ENCODE measurements at regions of chr3 and their contacts with region 1.

Region 1: DNA sequence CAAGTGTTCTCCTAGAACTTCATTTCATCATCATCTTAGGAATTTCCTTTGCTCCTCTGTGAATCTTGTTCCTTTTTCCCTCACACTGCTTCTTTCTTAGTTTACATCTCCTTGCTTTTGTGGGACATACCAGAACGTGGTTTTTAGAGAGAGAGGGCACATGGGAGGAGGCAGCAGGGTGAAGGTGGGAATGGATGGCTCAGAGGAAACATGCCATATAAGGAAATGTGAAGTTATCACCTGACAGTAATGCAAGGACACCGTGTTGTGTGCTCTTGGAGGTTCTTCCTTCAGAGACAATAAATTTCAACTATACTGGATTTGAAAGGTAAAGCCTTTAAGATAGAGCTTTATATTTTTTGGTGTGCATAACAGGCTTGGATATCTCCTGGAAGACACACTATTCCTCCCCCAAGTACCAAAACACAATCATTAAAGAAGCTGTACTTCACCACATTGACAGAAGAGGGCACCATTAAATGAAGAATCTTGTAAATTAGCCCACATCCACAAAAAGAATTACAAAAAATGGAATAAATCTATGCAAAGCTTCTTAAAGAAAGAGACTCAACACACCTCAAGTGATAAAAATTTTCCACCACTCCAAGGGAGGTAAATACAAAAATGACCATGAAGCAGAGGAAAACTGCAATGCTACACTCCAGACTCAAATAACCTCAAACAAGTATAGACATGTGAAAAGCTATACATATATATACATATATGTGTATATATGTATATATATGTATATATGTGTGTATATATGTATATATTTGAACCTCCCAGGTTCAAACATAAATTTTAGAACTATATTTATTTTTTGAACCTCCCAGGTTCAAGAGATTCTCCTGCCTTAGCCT is 26.1 kb downstream of the RPL39L start:
- DNase-seq: peak in 4 of 10 donors; percentile 20 to 61 (median 54)
- ATAC-seq: peak; percentile 39 to 54
- H3K4me3 Mint-ChIP-seq: no peak overlapping the region
- H3K27ac Mint-ChIP-seq: peak overlapping the region in 1 of 10 donors; percentile 42
- H3K4me1 Mint-ChIP-seq: peaks cover 0 to 7% (median 6%) of the 10 kb centered on the region in 4 donors
- H3K27me3 Mint-ChIP-seq: no peaks in the 10 kb centered on the region

Region 2: DNA sequence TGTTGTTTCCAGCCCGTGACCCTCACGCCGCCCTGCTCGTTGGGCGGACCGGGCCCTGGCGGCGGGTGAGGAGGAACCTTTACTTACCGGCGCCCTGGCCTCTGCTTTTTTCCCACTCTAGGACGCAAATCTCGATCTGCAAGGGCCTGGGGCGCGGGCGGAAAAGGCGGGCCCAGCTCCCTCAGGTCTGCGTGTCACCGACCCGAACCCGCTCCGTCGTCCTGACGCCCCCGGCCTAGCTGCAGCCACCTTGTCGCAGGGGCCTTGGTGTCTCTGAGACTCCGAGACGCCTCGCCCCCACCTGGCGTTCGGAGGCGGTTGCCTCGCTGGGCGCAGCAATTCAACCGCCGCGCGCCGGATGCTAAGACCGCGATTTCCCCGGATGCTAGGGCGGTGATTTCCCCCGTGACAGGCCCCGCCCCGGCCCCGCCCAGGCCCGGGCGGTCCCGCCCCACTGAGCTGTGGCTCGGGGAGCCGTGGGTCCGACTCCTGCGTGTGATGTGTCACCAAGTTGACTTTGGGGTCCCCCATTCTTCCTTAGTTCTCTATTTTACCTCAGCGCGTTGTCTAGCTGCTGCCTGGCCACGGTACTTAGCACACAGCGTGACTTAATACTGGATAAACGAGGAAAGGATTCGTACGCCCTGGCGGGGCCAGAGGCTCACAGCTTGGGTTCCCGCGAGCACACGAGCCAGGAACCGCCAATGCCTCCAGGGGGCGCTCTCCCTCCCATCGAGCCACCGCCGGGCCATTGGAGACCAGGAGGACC is 26.1 kb after region 1 on chr3 and contains the start of gene RPL39L:
- POLR2A ChIA-PET with region 1: interaction called, 10 read pairs
- DNase-seq: peak; percentile 87 to 96 (median 93)
- ATAC-seq: peak; percentile 95 to 96
- H3K4me3 Mint-ChIP-seq: peak within 1 kb of the TSS; percentile 84 to 94 (median 92)
- H3K27ac Mint-ChIP-seq: peak within 1 kb of the TSS; percentile 88 to 98 (median 96)
- H3K4me1 Mint-ChIP-seq: peaks cover 6 to 23% (median 12%) of the 10 kb centered on the region in 4 donors
- H3K27me3 Mint-ChIP-seq: no peaks in the 10 kb centered on the region
- polyA plus RNA-seq, gene RPL39L: 3.8 to 11.2 (median 4.4) TPM

Region 3: DNA sequence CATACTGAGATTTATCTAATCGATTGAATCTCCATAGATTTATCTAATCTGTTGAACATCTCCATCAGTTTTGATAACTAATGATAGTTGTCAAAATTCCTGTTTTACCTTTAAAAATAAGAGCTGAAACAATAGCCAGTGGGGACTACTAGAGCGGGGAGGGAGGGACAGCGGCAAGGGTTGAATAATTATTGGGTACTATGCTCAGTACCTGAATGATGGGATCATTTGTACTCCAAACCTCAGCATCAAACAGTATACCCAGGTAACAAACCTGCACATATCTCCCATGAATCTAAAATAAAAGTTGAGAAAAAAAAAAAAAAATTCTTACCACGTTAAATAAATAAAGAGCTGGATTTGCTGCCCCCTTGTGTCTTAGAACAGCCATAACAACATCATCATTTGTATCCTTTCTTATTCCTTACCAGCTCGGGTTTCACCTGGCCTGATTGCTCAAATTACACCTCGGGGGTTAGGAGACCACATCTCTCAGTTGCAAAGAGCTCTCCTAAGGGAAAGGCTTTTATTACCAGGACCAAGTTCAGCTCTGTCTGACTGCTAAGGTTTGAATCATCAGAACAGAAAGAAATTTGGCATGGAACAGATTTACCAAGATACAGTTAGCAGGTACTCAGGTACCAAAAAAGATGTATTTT is 51.9 kb after region 1 on chr3:
- POLR2A ChIA-PET with region 1: interaction called, 26 read pairs
- DNase-seq: peak in 9 of 10 donors; percentile 8 to 77 (median 53)
- ATAC-seq: peak; percentile 66 to 78
- H3K4me3 Mint-ChIP-seq: no peak overlapping the region
- H3K27ac Mint-ChIP-seq: no peak overlapping the region
- H3K4me1 Mint-ChIP-seq: peaks cover 0 to 2% (median 1%) of the 10 kb centered on the region in 4 donors
- H3K27me3 Mint-ChIP-seq: peaks cover 0 to 15% (median 3%) of the 10 kb centered on the region in 5 donors